Colonic mucosa (tissue), 4 donors: ENCODE measurements at regions of chr9 and their contacts with region 1.

Region 1: GRCh38 chr9:101977614-101978210 is 239.3 kb upstream of the GRIN3A start:
- DNase-seq: no peak
- H3K4me3 ChIP-seq: no peak overlapping the region
- H3K27ac ChIP-seq: no peak overlapping the region
- H3K4me1 ChIP-seq: no peaks in the 10 kb centered on the region
- H3K27me3 ChIP-seq: no peaks in the 10 kb centered on the region
- CTCF ChIP-seq: peak; percentile 59

Region 2: GRCh38 chr9:101791938-101792337 is 185.8 kb before region 1 on chr9:
- intact Hi-C with region 1: loop called (anchors 10 kb)
- DNase-seq: peak; percentile 49
- H3K4me3 ChIP-seq: no peak overlapping the region
- H3K27ac ChIP-seq: no peak overlapping the region
- H3K4me1 ChIP-seq: no peaks in the 10 kb centered on the region
- H3K27me3 ChIP-seq: no peaks in the 10 kb centered on the region
- CTCF ChIP-seq: peak; percentile 32